CD4-positive, alpha-beta T cell (primary cell): ENCODE measurements at regions of chr20 and their contacts with region 1.

Region 1: GRCh38 chr20:63782051-63782471 is 42.5 kb downstream of the SLC2A4RG start:
- DNase-seq: peak in 13 of 14 experiments; percentile 16 to 88 (median 48)
- ATAC-seq: peak; percentile 93
- H3K4me3 ChIP-seq: peak overlapping the region; percentile 14
- H3K4me3 Mint-ChIP-seq: peak overlapping the region; percentile 43
- H3K27ac ChIP-seq: peak overlapping the region in 1 of 2 donors; percentile 22
- H3K27ac Mint-ChIP-seq: peak overlapping the region; percentile 67
- H3K4me1 ChIP-seq: peaks cover 23% of the 10 kb centered on the region
- H3K4me1 Mint-ChIP-seq: peaks cover 23% of the 10 kb centered on the region
- H3K27me3 ChIP-seq: no peaks in the 10 kb centered on the region
- H3K27me3 Mint-ChIP-seq: no peaks in the 10 kb centered on the region
- CTCF ChIP-seq: peak; percentile 51

Region 2: DNA sequence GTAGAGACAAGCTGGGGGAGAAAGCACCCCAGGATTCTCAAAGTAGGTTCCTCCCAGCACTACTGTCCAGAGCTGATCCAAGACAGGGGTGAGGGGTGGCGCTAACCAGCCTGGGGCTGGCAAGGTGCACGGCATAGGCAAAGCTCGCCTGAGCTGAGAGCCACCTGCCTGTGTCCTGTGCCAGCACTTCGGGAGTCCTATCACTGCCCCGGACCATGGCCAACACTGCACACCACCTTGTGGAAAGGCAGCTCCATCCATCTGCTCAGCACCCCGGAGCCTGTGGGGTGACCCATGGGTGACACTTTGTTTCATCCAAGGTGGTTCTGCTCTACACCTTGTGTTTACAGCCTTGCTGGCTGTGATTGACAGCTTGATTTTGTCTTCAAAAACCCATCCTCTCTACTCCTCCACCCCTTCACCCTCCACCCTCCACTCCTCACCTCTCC is 1273.4 kb before region 1 on chr20:
- CTCF ChIA-PET with region 1: no interaction called
- POLR2A ChIA-PET with region 1: no interaction called
- intact Hi-C with region 1: no loop called
- DNase-seq: no peak
- ATAC-seq: peak; percentile 24
- H3K4me3 ChIP-seq: no peak overlapping the region
- H3K4me3 Mint-ChIP-seq: no peak overlapping the region
- H3K27ac ChIP-seq: no peak overlapping the region
- H3K27ac Mint-ChIP-seq: no peak overlapping the region
- H3K4me1 ChIP-seq: peaks cover 6% of the 10 kb centered on the region
- H3K4me1 Mint-ChIP-seq: no peaks in the 10 kb centered on the region
- H3K27me3 ChIP-seq: peaks cover 6 to 9% of the 10 kb centered on the region in 2 experiments
- H3K27me3 Mint-ChIP-seq: peaks cover under 1% of the 10 kb centered on the region
- CTCF ChIP-seq: no peak

Region 3: GRCh38 chr20:63750807-63751470 is 31.1 kb before region 1 on chr20:
- CTCF ChIA-PET with region 1: interaction called, 3 read pairs
- POLR2A ChIA-PET with region 1: interaction called, 3 read pairs
- intact Hi-C with region 1: loop called in 1 of 2 experiments (anchors 2 kb)
- DNase-seq: peak; percentile 44 to 86 (median 67)
- ATAC-seq: peak; percentile 93
- H3K4me3 ChIP-seq: peak overlapping the region; percentile 9
- H3K4me3 Mint-ChIP-seq: peak overlapping the region; percentile 81
- H3K27ac ChIP-seq: peak overlapping the region; percentile 37 to 70
- H3K27ac Mint-ChIP-seq: peak overlapping the region; percentile 93
- H3K4me1 ChIP-seq: peaks cover 35% of the 10 kb centered on the region
- H3K4me1 Mint-ChIP-seq: peaks cover 32% of the 10 kb centered on the region
- H3K27me3 ChIP-seq: no peaks in the 10 kb centered on the region
- H3K27me3 Mint-ChIP-seq: no peaks in the 10 kb centered on the region
- CTCF ChIP-seq: no peak

Region 4: GRCh38 chr20:63819224-63819921 is 37.3 kb after region 1 on chr20:
- CTCF ChIA-PET with region 1: no interaction called
- POLR2A ChIA-PET with region 1: no interaction called
- intact Hi-C with region 1: no loop called
- DNase-seq: peak in 2 of 14 experiments; percentile 19 to 29
- ATAC-seq: peak; percentile 14
- H3K4me3 ChIP-seq: no peak overlapping the region
- H3K4me3 Mint-ChIP-seq: peak overlapping the region; percentile 30
- H3K27ac ChIP-seq: no peak overlapping the region
- H3K27ac Mint-ChIP-seq: no peak overlapping the region
- H3K4me1 ChIP-seq: no peaks in the 10 kb centered on the region
- H3K4me1 Mint-ChIP-seq: peaks cover 5% of the 10 kb centered on the region
- H3K27me3 ChIP-seq: peaks cover 0 to 5% of the 10 kb centered on the region in 2 experiments
- H3K27me3 Mint-ChIP-seq: peaks cover 11% of the 10 kb centered on the region
- CTCF ChIP-seq: no peak

Region 5: DNA sequence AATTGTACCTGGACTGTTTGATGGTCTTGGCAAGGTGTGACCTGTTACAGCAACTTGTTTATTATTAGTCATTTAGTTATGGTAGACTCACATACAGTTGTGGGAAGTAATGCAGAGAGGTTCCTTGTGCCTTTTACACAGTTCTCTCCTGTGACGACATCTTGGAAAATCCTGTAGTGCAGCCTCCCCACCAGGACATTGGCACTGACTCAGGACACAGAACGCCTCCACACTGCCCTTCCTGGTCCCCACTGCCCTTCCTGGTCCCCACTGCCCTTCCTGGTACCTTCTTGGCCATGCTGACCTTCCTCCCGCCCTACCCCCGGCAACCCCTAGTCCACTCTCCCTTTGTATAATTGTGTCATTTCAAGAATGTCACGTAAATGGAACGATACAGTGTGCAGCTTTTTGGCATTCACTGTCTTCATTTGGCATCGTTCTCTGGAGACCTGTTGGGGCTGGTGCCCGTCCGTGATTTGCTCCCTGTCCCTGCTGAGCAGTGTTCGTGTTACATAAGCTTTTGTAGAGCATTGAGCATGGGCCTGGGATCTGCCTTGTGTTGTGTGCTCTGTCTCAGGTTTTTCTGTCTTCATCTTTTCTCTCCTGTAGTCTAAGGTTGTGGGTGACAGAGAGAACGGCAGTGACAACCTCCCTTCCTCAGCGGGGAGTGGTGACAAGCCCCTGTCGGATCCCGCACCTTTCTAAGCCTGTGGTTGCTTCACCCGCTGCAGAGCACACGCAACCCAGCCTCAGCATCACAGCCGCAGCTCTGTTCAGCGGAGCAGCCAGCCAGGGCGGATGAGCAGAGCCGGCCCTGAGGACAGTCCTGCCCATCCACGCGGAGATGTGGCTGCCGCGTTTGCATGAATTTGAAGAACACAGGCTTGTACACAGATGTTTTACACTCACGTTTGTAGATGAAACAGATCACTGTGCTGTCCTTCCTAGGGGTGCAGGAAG is 107.5 kb after region 1 on chr20:
- CTCF ChIA-PET with region 1: no interaction called
- POLR2A ChIA-PET with region 1: no interaction called
- intact Hi-C with region 1: no loop called
- DNase-seq: peak in 2 of 14 experiments; percentile 45 to 59
- ATAC-seq: no peak
- H3K4me3 ChIP-seq: no peak overlapping the region
- H3K4me3 Mint-ChIP-seq: no peak overlapping the region
- H3K27ac ChIP-seq: no peak overlapping the region
- H3K27ac Mint-ChIP-seq: no peak overlapping the region
- H3K4me1 ChIP-seq: peaks cover 7% of the 10 kb centered on the region
- H3K4me1 Mint-ChIP-seq: peaks cover 7% of the 10 kb centered on the region
- H3K27me3 ChIP-seq: no peaks in the 10 kb centered on the region
- H3K27me3 Mint-ChIP-seq: no peaks in the 10 kb centered on the region
- CTCF ChIP-seq: no peak